ENCODE measurements at regions of chr9 and their contacts with region 1.

Region 1: GRCh38 chr9:71806901-71807307 is 38.6 kb upstream of the CEMIP2 start:
- DNase-seq: no peak

Region 2: DNA sequence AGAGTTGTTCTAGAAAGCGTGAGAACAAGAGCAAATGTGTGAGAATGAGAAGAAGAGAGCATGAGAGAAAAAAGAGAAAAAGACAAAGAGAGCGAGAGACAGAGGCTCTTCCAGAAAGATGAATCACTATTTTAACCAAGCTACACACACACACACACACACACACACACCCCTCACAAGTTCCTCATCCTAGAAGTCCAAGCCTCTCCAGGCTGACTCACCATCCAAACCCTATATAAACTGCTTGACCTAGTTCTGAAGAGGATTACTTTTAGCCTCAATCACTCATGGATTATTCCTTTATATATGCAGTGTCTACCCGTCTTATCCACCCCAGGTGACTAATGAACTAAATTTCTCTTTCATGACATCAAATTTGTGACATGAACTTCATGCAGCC is 215.9 kb after region 1 on chr9:
- intact Hi-C with region 1: loop called (anchors 2 kb)
- DNase-seq: no peak

Region 3: GRCh38 chr9:72271613-72272478 is 464.9 kb after region 1 on chr9:
- intact Hi-C with region 1: loop called (anchors 10 kb)
- DNase-seq: no peak